Activated CD4-positive, alpha-beta T cell treated with anti-CD3 and anti-CD28 coated beads, Interleukin-2, amount 10 ng/mL, durations not matched to agents 24 days and 14 days (primary cell): ENCODE measurements at regions of chr7 and their contacts with region 1.

Region 1: DNA sequence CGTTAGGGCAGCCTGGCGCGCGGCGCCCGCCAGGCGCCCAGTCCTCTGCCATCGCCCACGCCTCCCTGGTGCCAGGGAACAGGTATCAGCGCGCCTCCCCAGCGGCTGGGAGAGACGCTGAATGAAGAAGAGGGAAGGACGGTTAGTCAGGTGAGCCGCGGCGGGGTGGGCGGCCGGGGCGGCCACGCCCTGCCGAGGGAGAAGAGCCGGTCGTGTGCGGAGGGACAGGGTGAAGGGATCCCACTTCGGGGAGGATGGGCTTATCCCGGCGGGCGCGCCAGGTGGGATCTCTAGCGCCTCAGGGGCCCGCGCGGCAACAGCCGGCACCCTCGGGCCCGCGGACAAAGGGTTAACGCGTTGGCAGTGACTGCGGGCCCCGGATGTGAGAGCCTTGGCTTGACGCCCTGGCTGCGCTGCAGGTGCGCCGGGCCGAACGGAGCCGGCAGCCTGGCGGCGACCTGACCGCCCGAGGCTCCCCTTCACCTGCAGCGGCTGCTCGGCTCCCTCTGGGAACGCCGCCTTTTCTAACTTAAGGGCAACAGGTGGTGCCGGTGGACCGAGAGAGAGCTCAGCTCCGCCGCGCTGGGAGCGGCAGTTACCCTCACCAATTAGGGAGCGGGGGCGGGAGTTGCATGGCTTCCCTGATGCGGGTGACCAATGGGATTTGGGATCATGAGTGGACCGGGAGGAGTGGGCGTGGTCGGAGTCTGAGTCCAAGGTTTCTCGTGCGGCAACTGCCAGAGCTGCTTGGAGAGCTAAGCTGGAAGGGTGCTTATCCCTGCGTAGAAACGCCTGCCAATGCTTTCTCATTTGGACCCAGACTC is at the start of gene ARL4A:
- DNase-seq: peak; percentile 97
- H3K4me3 Mint-ChIP-seq: peak within 1 kb of the TSS; percentile 91
- H3K27ac Mint-ChIP-seq: peak within 1 kb of the TSS; percentile 98
- H3K4me1 Mint-ChIP-seq: peaks cover 27% of the 10 kb centered on the region
- H3K27me3 Mint-ChIP-seq: no peaks in the 10 kb centered on the region
- total RNA-seq, gene ARL4A: 8.9 and 11.0 TPM in 2 replicates

Region 2: DNA sequence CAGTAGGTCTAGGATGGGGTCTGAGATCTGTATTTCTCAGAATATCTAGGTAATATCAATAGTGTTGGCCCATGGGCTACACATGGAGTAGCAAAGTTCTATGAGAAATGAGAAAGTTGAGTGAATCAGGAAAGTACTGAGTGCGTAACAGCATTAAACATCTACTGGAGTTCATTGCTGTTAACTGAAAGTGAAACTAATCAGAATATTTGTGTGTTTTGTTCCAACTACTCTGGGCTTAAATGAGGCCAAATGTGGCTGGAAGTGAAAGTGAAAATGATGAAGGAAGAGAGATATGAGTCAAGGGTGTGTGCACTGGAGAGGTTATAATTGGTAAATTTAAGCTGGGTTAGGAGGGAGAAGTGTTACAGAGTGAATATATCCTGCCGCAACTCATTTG is 429.5 kb before region 1 on chr7:
- intact Hi-C with region 1: loop called (anchors 5 kb)
- DNase-seq: peak; percentile 88
- H3K4me3 Mint-ChIP-seq: no peak overlapping the region
- H3K27ac Mint-ChIP-seq: no peak overlapping the region
- H3K4me1 Mint-ChIP-seq: peaks cover 8% of the 10 kb centered on the region
- H3K27me3 Mint-ChIP-seq: peaks cover 7% of the 10 kb centered on the region

Region 3: DNA sequence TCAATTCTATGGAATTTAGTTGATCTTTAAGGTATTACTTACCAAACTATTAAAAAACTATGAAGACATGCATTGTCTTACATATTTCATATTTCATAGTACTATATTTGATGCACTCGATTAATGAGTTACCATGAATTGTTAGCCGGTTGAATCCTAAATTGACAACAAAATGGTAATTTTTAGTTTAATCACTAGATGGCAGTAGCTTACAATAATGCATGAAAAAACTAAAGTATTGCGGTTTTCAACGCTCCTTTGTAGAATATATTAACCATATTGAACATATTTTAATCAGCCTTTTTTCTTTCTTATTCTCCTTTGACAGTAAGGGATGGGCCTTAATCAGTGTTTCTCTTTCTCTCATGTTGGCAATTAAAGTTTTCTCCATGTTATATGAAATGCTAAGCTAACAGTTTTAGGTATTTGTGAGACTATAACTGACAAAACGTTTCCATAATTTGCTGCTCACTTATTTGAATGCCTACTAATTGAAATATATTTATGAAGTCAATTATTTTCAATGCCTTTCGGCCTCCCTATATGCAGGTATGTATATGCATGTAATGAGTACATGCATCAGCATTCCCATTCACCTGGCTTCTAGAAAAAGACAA is 48.1 kb before region 1 on chr7:
- intact Hi-C with region 1: loop called (anchors 2 kb)
- DNase-seq: no peak
- H3K4me3 Mint-ChIP-seq: no peak overlapping the region
- H3K27ac Mint-ChIP-seq: no peak overlapping the region
- H3K4me1 Mint-ChIP-seq: peaks cover 15% of the 10 kb centered on the region
- H3K27me3 Mint-ChIP-seq: peaks cover 9% of the 10 kb centered on the region

Region 4: GRCh38 chr7:12722636-12723605 is 35.8 kb after region 1 on chr7:
- intact Hi-C with region 1: loop called (anchors 1 kb)
- DNase-seq: no peak
- H3K4me3 Mint-ChIP-seq: peak overlapping the region; percentile 3
- H3K27ac Mint-ChIP-seq: peak overlapping the region; percentile 75
- H3K4me1 Mint-ChIP-seq: peaks cover 34% of the 10 kb centered on the region
- H3K27me3 Mint-ChIP-seq: no peaks in the 10 kb centered on the region

Region 5: GRCh38 chr7:13117103-13117502 is 430.0 kb after region 1 on chr7:
- intact Hi-C with region 1: loop called (anchors 5 kb)
- DNase-seq: no peak
- H3K4me3 Mint-ChIP-seq: no peak overlapping the region
- H3K27ac Mint-ChIP-seq: no peak overlapping the region
- H3K4me1 Mint-ChIP-seq: no peaks in the 10 kb centered on the region
- H3K27me3 Mint-ChIP-seq: peaks cover 1% of the 10 kb centered on the region